Astrocyte of the cerebellum (primary cell): ENCODE measurements at regions of chr4 and their contacts with region 1.

Region 1: DNA sequence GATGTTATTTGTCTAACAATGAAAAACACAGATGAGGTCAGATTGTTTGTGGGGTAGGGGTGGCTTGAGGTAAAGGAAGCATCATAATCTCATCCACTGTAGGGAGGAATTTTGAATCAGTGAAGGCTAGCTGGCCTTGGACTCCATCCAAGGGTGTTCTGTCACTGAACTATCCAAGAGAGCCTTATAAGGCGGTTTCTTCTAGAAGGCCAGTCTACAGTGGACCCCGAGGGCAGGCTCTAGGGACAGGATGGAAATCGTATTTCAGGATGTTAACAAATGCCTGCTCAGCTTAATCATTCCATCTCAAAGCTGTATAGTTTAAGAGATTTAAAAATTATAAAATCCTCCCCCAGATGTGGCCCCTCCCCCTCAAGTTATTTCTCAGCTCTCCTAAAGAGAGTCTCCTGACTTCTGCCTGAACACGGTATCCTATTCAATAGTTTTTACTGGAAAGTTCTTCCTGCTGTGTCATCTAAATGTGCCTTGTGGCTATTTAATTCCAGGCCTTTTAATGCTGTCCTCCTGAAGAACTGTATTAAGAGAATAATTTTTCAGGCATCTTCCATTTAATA is 8.0 kb downstream of the IGFBP7 start:
- DNase-seq: peak; percentile 35
- H3K4me3 ChIP-seq: no peak overlapping the region
- CTCF ChIP-seq: no peak

Region 2: DNA sequence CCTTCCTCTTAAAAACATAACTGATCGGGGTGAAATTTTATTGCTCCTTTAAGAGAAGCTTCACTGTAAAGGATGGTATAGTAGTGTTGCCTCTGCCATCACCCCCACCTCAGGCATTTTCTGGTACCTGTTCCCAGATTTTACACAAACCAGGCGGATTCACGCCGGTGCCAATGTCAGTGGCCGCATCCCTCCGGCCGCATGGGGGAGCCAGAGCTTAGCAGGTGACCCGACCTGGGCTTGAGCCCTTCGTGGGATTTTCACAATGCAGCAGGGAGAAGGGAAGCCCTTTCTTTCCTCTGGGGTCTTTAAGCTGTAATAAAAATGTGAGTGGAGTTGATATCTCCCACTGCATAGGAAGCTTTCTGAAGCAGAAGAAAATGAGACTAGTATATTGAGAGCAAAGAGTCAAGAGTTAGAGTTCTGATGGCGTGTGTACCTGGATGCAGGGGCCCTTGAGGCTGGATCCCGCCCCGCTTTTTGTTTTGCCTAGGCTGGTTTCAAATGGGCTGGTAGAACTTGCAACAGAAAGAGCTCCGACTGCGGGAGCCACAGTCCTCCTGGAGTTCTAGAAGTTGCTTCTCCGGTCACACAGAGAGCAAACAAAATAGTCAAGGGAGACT is 64.0 kb before region 1 on chr4:
- in situ Hi-C with region 1: loop called (anchors 5 kb)
- DNase-seq: no peak
- H3K4me3 ChIP-seq: no peak overlapping the region
- CTCF ChIP-seq: peak; percentile 97

Region 3: DNA sequence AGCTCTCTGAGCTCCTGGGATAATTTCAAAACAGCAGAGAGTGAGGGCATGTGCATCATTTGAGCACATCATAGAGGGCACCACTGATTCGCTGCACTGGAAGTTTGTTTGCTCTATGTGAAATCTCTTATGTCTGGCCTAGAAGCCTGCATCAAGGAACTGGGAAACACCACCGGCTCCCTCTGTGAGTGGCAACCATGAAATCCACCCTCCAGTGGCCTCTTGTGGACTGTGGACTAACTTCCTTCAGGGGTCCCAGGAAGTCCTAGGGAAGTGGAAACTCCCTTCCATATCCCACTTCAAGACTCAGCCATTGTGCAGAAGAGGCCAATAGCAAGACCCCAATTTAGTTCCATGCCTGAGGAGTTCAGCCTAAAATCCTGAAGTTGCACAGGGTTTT is 56.1 kb after region 1 on chr4:
- in situ Hi-C with region 1: no loop called
- DNase-seq: no peak
- H3K4me3 ChIP-seq: no peak overlapping the region
- CTCF ChIP-seq: peak; percentile 3